ENCODE measurements at regions of chr5 and their contacts with region 1.

Region 1: DNA sequence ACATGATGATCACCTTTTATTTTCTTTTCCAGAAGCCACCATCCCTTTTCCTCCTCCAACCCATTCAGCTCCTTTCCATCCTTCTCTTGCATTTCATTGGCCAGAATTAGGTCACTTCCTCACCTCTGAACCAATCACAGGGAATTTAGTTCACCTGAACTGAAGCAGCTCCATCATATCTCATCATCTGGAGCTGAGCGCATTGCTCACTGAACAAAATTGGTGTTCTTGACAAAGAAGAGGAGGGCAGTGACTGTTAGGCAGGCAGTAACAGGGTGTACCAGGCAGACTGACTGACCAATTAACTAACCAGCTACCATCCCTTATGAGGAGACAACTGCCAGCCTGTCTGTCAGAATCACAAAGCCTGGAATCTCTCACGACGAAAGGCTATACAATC is 1.8 kb upstream of the ZNF354A start:
- DNase-seq: no peak
- ATAC-seq: no peak
- H3K4me3 ChIP-seq: no peak overlapping the region
- H3K27ac ChIP-seq: no peak overlapping the region
- H3K4me1 ChIP-seq: no peaks in the 10 kb centered on the region
- H3K27me3 ChIP-seq: no peaks in the 10 kb centered on the region
- CTCF ChIP-seq: no peak

Region 2: DNA sequence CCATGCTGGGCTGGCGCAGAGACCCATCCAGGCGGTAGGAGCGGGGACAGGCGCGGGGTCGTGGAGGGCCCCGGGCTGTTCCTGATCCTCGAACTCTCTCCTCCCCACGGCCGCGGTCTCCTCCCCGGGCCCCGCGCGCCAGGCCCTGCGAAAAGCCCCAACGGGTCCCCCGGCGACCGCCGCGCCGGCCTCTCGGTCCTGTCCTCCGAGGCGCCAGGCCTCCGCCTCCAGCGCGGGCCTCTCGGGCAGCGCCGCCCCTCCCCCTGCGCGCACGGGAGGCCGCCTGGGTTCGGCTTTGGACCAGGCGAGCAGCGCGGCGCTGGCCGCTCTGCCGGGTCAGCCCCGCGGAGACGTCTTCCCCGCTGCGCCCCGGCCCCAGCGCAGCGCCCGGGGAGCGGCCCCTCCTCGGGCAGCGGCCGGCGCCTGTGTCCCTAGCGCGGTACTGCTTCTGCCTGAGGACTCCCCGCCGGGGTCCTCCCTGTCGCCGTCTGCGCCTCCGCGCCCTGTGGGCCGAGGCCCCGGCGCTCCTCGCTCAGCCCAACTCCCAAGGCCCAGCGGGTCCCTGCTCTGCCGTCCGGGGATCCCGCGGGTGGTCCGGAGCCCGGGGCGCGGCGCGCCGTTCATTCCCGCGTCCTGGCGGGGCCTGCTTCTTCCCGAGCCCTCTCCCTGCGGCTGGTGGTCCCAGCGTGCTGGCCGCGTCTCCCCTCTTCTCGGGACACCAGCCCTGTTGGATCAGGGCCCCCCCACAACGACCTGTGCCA is 155.5 kb before region 1 on chr5:
- intact Hi-C with region 1: no loop called
- DNase-seq: no peak
- ATAC-seq: no peak
- H3K4me3 ChIP-seq: peak overlapping the region in 2 of 4 donors; percentile 6 to 20
- H3K27ac ChIP-seq: no peak overlapping the region
- H3K4me1 ChIP-seq: no peaks in the 10 kb centered on the region
- H3K27me3 ChIP-seq: peaks cover 0 to 11% (median 3%) of the 10 kb centered on the region in 4 donors
- CTCF ChIP-seq: no peak

Region 3: GRCh38 chr5:178793151-178793550 is 60.9 kb after region 1 on chr5:
- intact Hi-C with region 1: no loop called
- DNase-seq: peak in 2 of 6 donors; percentile 45 to 65
- ATAC-seq: peak in 2 of 4 donors; percentile 43 to 48
- H3K4me3 ChIP-seq: no peak overlapping the region
- H3K27ac ChIP-seq: no peak overlapping the region
- H3K4me1 ChIP-seq: no peaks in the 10 kb centered on the region
- H3K27me3 ChIP-seq: no peaks in the 10 kb centered on the region
- CTCF ChIP-seq: no peak

Region 4: DNA sequence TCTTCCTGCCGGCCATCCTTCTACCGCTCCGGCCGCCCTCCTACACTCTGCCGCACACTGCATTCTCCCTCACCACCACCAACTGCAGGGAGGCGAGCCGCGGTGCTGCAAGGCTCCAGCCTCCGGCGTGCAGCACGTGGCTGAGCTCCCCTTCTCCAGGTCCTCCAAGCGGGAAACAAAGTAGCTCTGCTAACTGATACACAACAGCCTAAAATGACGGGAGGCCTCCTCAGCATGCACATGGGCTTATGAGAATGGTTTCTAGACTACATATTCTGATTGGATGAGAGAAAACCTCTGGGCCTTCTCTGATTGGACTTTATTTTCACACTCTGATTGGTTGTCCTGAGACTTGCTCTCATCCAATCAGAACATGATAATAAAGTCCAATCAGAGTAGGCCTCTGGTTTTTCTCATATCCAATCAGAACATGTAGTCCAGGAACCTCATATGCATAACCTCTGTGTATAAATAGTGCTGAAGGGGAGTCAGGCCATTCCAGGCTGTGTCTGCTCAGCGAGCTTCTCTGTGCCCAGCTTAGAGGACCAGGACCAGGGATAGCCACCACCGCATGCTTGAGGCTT is 100.4 kb after region 1 on chr5:
- intact Hi-C with region 1: loop called in 1 of 3 experiments (anchors 5 kb)
- DNase-seq: no peak
- ATAC-seq: no peak
- H3K4me3 ChIP-seq: no peak overlapping the region
- H3K27ac ChIP-seq: no peak overlapping the region
- H3K4me1 ChIP-seq: no peaks in the 10 kb centered on the region
- H3K27me3 ChIP-seq: no peaks in the 10 kb centered on the region
- CTCF ChIP-seq: no peak

Region 5: GRCh38 chr5:178859625-178860531 is 127.6 kb after region 1 on chr5 and contains the start of gene ZNF354B:
- intact Hi-C with region 1: loop called in 1 of 3 experiments (anchors 5 kb)
- DNase-seq: peak; percentile 89 to 97 (median 91)
- ATAC-seq: peak; percentile 97 to 99 (median 98)
- H3K4me3 ChIP-seq: peak within 1 kb of the TSS; percentile 70 to 95 (median 81)
- H3K27ac ChIP-seq: peak within 1 kb of the TSS; percentile 64 to 82 (median 70)
- H3K4me1 ChIP-seq: peaks cover 0 to 8% (median 4%) of the 10 kb centered on the region in 3 donors
- H3K27me3 ChIP-seq: no peaks in the 10 kb centered on the region
- CTCF ChIP-seq: no peak
- total RNA-seq, gene ZNF354B: 4.4 to 11.8 (median 7.5) TPM

Region 6: GRCh38 chr5:179051784-179052183 is 319.5 kb after region 1 on chr5:
- intact Hi-C with region 1: no loop called
- DNase-seq: no peak
- ATAC-seq: no peak
- H3K4me3 ChIP-seq: no peak overlapping the region
- H3K27ac ChIP-seq: no peak overlapping the region
- H3K4me1 ChIP-seq: no peaks in the 10 kb centered on the region
- H3K27me3 ChIP-seq: no peaks in the 10 kb centered on the region
- CTCF ChIP-seq: no peak

Measured in pancreas (tissue), 10 donors.